ENCODE measurements at regions of chr11 and their contacts with region 1.

Region 1: DNA sequence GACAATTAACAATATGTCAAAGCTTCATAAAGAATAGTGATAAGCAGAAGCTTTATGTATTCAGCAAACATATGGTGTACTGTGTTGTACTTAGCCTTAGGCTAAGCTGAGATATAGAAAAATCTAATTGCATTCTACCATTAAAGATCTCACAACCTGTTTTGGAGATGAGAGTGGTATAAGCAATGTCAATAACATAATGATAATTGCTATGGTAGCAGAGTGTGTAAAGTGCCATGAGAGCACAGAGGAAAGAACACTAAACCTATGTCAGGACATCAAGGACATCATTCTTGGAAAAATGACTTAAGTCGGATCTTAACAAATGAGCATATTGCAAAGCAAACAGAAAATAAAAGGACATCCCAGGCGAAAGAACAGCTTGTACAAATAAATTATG is 28.6 kb upstream of the ANGPTL5 start:
- DNase-seq: no peak
- H3K4me3 ChIP-seq: no peak overlapping the region
- H3K27ac ChIP-seq: no peak overlapping the region
- H3K4me1 ChIP-seq: no peaks in the 10 kb centered on the region
- H3K27me3 ChIP-seq: no peaks in the 10 kb centered on the region
- CTCF ChIP-seq: no peak
- EP300 ChIP-seq: no peak
- POLR2A ChIP-seq: no peak
- RAD21 ChIP-seq: no peak

Region 2: DNA sequence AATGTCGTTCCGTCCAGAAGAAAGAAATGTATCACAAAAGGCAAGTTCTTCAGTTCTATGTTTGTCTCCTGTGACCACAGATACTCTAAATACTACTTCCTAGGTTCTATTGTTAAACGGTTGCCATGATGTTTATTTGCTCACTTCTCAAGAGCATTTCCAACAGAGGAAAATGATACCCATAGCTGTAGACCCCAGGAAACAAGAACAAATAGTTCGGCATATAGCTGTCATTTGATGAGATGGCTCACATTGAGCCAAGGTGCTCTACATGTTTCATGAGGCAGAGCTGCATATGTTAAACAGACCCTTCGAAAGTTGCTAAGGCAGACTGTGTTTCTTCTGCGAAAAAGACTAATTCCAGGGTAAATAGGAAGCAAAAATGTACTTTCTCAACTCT is 13.2 kb before region 1 on chr11:
- CTCF ChIA-PET with region 1: interaction called, 10 read pairs
- POLR2A ChIA-PET with region 1: no interaction called
- DNase-seq: no peak
- H3K4me3 ChIP-seq: no peak overlapping the region
- H3K27ac ChIP-seq: no peak overlapping the region
- H3K4me1 ChIP-seq: no peaks in the 10 kb centered on the region
- H3K27me3 ChIP-seq: no peaks in the 10 kb centered on the region
- CTCF ChIP-seq: no peak
- EP300 ChIP-seq: no peak
- POLR2A ChIP-seq: no peak
- RAD21 ChIP-seq: no peak

Measured in H1 (cell line).